ENCODE measurements at regions of chr21 and their contacts with region 1.

Region 1: GRCh38 chr21:38126669-38127303 is 130.0 kb upstream of the KCNJ15 start:
- DNase-seq: no peak
- ATAC-seq: no peak
- H3K4me3 Mint-ChIP-seq: no peak overlapping the region
- H3K27ac Mint-ChIP-seq: no peak overlapping the region
- H3K4me1 Mint-ChIP-seq: no peaks in the 10 kb centered on the region
- H3K27me3 Mint-ChIP-seq: peaks cover 5% of the 10 kb centered on the region
- CTCF ChIP-seq: no peak

Region 2: GRCh38 chr21:37087188-37087587 is 1039.6 kb before region 1 on chr21:
- CTCF ChIA-PET with region 1: no interaction called
- POLR2A ChIA-PET with region 1: no interaction called
- intact Hi-C with region 1: no loop called
- DNase-seq: no peak
- ATAC-seq: no peak
- H3K4me3 Mint-ChIP-seq: no peak overlapping the region
- H3K27ac Mint-ChIP-seq: no peak overlapping the region
- H3K4me1 Mint-ChIP-seq: peaks cover 17% of the 10 kb centered on the region
- H3K27me3 Mint-ChIP-seq: no peaks in the 10 kb centered on the region
- CTCF ChIP-seq: no peak

Region 3: GRCh38 chr21:37711836-37712568 is 414.8 kb before region 1 on chr21:
- CTCF ChIA-PET with region 1: interaction called, 3 read pairs
- POLR2A ChIA-PET with region 1: no interaction called
- intact Hi-C with region 1: loop called (anchors 5 kb)
- DNase-seq: no peak
- ATAC-seq: peak; percentile 50
- H3K4me3 Mint-ChIP-seq: no peak overlapping the region
- H3K27ac Mint-ChIP-seq: no peak overlapping the region
- H3K4me1 Mint-ChIP-seq: no peaks in the 10 kb centered on the region
- H3K27me3 Mint-ChIP-seq: peaks cover 12% of the 10 kb centered on the region
- CTCF ChIP-seq: no peak

Region 4: DNA sequence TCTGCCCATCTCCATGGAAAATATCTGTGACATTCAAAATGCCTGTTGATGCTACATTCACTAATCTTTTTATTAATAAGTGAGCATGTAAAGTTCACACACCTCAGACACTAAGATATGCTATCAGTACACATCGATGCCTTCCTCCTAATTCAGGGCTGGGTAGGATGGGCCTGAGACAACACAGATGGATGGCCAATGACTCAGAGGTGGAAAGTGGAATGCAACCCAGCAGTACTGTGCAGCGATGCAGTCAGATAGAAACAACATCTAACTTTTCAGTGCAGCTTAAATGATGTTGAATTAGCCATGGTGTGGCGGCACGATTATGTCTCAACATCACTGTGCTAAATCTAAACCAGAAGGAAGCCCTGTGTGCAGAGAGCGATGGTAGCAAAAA is 31.6 kb before region 1 on chr21:
- CTCF ChIA-PET with region 1: no interaction called
- POLR2A ChIA-PET with region 1: no interaction called
- intact Hi-C with region 1: no loop called
- DNase-seq: no peak
- ATAC-seq: no peak
- H3K4me3 Mint-ChIP-seq: no peak overlapping the region
- H3K27ac Mint-ChIP-seq: no peak overlapping the region
- H3K4me1 Mint-ChIP-seq: no peaks in the 10 kb centered on the region
- H3K27me3 Mint-ChIP-seq: no peaks in the 10 kb centered on the region
- CTCF ChIP-seq: no peak

Measured in activated B cell treated with CpG ODN at 0.5 μM for 24 hours (primary cell).